ENCODE measurements at regions of chr2 and their contacts with region 1.

Region 1: GRCh38 chr2:165161510-165161909 is 42.3 kb downstream of the SCN3A start:
- DNase-seq: peak; percentile 61
- ATAC-seq: peak; percentile 75
- H3K4me3 ChIP-seq: no peak overlapping the region
- H3K27ac ChIP-seq: no peak overlapping the region
- H3K4me1 ChIP-seq: peaks cover 2% of the 10 kb centered on the region
- H3K27me3 ChIP-seq: no peaks in the 10 kb centered on the region
- CTCF ChIP-seq: no peak
- POLR2A ChIP-seq: no peak
- RAD21 ChIP-seq: no peak

Region 2: DNA sequence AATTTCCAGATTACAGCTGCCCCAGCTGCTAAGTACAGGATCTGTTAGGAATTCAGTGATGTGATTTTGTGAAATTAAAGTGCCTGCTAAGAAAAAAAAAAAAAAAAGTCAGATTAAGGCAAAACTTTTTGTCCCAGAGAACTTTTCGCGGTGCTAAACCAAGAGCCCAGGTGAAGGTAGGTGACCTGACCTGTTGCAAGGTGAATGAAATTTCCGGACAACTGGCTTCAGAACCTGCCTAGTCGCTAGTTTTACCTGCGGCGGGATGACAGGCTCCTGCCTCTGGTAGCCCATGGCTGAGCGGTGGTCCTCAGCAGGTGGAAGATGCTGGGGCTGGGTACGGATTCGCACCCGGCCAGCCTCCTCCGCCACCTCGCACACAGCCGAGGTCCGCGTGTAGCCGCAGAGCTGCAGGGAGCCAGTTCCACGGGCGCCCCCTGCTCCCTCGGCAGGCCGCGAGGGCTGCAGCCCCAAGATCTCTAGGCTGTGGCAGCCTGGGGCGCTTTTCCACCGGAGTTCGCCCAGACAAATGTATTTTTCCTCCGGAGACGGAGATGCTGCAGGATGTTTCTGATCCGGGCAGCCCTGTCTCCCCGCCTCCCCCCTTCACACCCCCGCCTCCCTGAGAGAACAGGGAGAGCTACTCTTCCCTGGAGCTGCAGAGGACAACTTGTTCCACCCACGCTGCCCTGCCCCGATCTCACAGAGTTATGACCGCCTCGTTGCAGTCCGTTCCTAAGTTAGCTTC is 206.4 kb before region 1 on chr2 and contains the start of gene SLC38A11:
- CTCF ChIA-PET with region 1: no interaction called
- POLR2A ChIA-PET with region 1: no interaction called
- dilution Hi-C with region 1: no loop called
- in situ Hi-C with region 1: no loop called
- intact Hi-C with region 1: no loop called
- DNase-seq: no peak
- ATAC-seq: peak; percentile 85
- H3K4me3 ChIP-seq: peak within 1 kb of the TSS; percentile 36
- H3K27ac ChIP-seq: no peak within 1 kb of the TSS
- H3K4me1 ChIP-seq: peaks cover 1% of the 10 kb centered on the region; the same call in 1 of the 2 replicates
- H3K27me3 ChIP-seq: peaks cover 5% of the 10 kb centered on the region
- CTCF ChIP-seq: peak; percentile 10; the same call in 1 of the 2 replicates
- POLR2A ChIP-seq: no peak
- RAD21 ChIP-seq: 0 out of 2 replicates have a peak, but pooled peaks have one; percentile 3
- total RNA-seq, gene SLC38A11: under 0.01 and 0.18 TPM in 2 replicates

Region 3: GRCh38 chr2:165141601-165142354 is 19.7 kb before region 1 on chr2:
- CTCF ChIA-PET with region 1: no interaction called
- POLR2A ChIA-PET with region 1: interaction called, 16 read pairs
- dilution Hi-C with region 1: no loop called
- in situ Hi-C with region 1: no loop called
- intact Hi-C with region 1: no loop called
- DNase-seq: peak; percentile 3
- ATAC-seq: no peak
- H3K4me3 ChIP-seq: no peak overlapping the region
- H3K27ac ChIP-seq: no peak overlapping the region
- H3K4me1 ChIP-seq: no peaks in the 10 kb centered on the region
- H3K27me3 ChIP-seq: no peaks in the 10 kb centered on the region
- CTCF ChIP-seq: peak; percentile 35
- POLR2A ChIP-seq: no peak
- RAD21 ChIP-seq: no peak; the same call in 1 of the 2 replicates

Region 4: GRCh38 chr2:165357758-165358157 is 196.2 kb after region 1 on chr2:
- CTCF ChIA-PET with region 1: no interaction called
- POLR2A ChIA-PET with region 1: no interaction called
- dilution Hi-C with region 1: no loop called
- in situ Hi-C with region 1: no loop called
- intact Hi-C with region 1: no loop called
- DNase-seq: peak; percentile 74
- ATAC-seq: peak; percentile 88
- H3K4me3 ChIP-seq: no peak overlapping the region
- H3K27ac ChIP-seq: no peak overlapping the region
- H3K4me1 ChIP-seq: no peaks in the 10 kb centered on the region
- H3K27me3 ChIP-seq: no peaks in the 10 kb centered on the region
- CTCF ChIP-seq: no peak
- POLR2A ChIP-seq: no peak
- RAD21 ChIP-seq: no peak

Region 5: GRCh38 chr2:166841679-166842078 is 1680.2 kb after region 1 on chr2:
- CTCF ChIA-PET with region 1: no interaction called
- POLR2A ChIA-PET with region 1: no interaction called
- dilution Hi-C with region 1: no loop called
- in situ Hi-C with region 1: no loop called
- intact Hi-C with region 1: no loop called
- DNase-seq: no peak
- ATAC-seq: no peak
- H3K4me3 ChIP-seq: no peak overlapping the region
- H3K27ac ChIP-seq: no peak overlapping the region
- H3K4me1 ChIP-seq: no peaks in the 10 kb centered on the region
- H3K27me3 ChIP-seq: no peaks in the 10 kb centered on the region
- CTCF ChIP-seq: no peak
- POLR2A ChIP-seq: no peak
- RAD21 ChIP-seq: no peak

Measured in IMR-90 (cell line).